ENCODE measurements at regions of chr3 and their contacts with region 1.

Region 1: GRCh38 chr3:141311496-141312353 is 56.6 kb upstream of the ZBTB38 start:
- DNase-seq: peak; percentile 92
- ATAC-seq: peak; percentile 97
- H3K4me3 Mint-ChIP-seq: peak overlapping the region; percentile 100
- H3K27ac Mint-ChIP-seq: peak overlapping the region; percentile 98
- H3K4me1 Mint-ChIP-seq: peaks cover 19% of the 10 kb centered on the region
- H3K27me3 Mint-ChIP-seq: no peaks in the 10 kb centered on the region
- CTCF ChIP-seq: no peak

Region 2: GRCh38 chr3:140941434-140942220 is 370.1 kb before region 1 on chr3 and contains the start of gene SLC25A36:
- CTCF ChIA-PET with region 1: no interaction called
- POLR2A ChIA-PET with region 1: no interaction called
- intact Hi-C with region 1: loop called (anchors 5 kb)
- DNase-seq: peak; percentile 86
- ATAC-seq: peak; percentile 96
- H3K4me3 Mint-ChIP-seq: peak within 1 kb of the TSS; percentile 96
- H3K27ac Mint-ChIP-seq: peak within 1 kb of the TSS; percentile 96
- H3K4me1 Mint-ChIP-seq: peaks cover 37% of the 10 kb centered on the region
- H3K27me3 Mint-ChIP-seq: no peaks in the 10 kb centered on the region
- CTCF ChIP-seq: no peak
- total RNA-seq, gene SLC25A36: 40.4 and 45.7 TPM in 2 replicates

Region 3: GRCh38 chr3:141050576-141051442 is 260.9 kb before region 1 on chr3 and contains the start of gene SPSB4:
- CTCF ChIA-PET with region 1: no interaction called
- POLR2A ChIA-PET with region 1: no interaction called
- intact Hi-C with region 1: no loop called
- DNase-seq: no peak
- ATAC-seq: no peak
- H3K4me3 Mint-ChIP-seq: peak within 1 kb of the TSS; percentile 15
- H3K27ac Mint-ChIP-seq: no peak within 1 kb of the TSS
- H3K4me1 Mint-ChIP-seq: peaks cover 12% of the 10 kb centered on the region
- H3K27me3 Mint-ChIP-seq: peaks cover 58% of the 10 kb centered on the region
- CTCF ChIP-seq: no peak
- total RNA-seq, gene SPSB4: not detected in 2 replicates

Region 4: DNA sequence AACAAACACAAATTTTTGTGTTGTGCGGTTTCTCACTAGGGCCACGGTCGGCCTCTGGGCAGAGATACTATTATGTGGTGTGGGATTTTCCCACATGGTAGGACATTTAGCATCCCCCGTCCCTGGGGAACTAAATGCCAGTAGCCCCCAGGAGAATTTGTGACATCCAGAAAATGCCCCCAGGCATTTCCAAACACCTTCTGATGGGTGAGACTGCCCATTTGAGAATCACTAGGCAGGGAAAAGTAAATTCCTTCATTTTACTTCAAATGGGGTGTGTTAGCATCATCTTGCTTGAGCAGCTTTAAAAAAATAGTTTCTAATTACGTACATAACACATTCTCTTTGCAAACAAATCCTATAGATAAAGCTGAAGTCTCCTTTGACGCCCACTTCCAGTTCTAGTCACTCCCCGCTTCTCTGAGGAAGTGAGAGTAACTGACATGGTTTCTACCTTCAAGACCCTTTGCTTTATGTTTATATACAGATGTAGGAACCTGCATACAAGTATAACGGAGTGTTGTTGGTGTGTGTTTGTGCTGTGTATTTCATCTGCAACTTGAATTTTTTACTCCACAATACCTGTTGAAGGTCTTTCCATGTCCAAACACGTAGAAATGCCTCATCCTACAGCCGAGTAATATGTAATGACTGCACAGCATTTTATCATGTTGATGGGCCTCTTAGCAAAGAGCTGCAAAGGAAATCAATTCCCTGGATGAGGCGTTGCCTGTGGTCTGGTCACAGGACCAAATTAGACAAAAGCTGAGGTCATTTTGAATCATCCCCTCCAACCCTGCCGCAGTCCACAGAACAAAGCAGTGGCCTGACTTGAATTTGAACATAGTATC is 25.2 kb after region 1 on chr3:
- CTCF ChIA-PET with region 1: interaction called, 9 read pairs
- POLR2A ChIA-PET with region 1: interaction called, 19 read pairs
- intact Hi-C with region 1: loop called (anchors 2 kb)
- DNase-seq: no peak
- ATAC-seq: peak; percentile 89
- H3K4me3 Mint-ChIP-seq: peak overlapping the region; percentile 51
- H3K27ac Mint-ChIP-seq: peak overlapping the region; percentile 73
- H3K4me1 Mint-ChIP-seq: peaks cover 26% of the 10 kb centered on the region
- H3K27me3 Mint-ChIP-seq: peaks cover 5% of the 10 kb centered on the region
- CTCF ChIP-seq: no peak

Region 5: DNA sequence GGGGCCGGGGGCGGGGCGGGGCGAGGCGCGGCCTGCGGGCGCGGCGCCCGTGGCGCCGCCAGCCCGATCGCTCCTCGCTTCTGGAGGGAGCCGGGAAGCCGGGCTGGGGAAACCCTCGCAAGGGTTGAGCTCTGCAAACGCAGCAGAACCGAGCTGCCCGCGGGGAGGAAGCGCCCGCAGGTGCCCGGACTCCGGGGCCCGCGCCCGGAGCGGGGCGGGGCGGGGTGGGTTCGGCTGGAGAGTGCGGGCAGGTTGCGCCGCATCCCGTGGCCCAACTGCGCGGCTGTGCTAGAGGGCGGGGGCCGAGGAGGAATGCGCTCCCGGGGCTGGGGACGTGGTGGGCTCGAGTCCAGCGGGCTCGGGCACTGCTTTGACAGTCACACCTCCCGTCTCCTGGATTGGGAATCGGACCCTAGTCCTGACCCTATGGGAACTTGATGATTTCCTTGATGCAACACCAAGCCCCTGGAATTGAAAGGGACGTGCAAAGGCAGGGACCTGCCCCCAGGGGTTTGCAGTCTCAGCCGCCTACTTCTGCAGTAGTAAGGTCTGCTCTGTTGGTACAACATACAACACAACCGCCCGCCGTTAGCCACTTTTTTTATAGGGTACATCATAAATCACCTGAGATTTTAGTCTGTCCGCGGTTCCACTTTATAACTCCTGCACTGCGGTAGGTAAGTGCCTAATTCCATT is 90.9 kb after region 1 on chr3:
- CTCF ChIA-PET with region 1: no interaction called
- POLR2A ChIA-PET with region 1: interaction called, 24 read pairs
- intact Hi-C with region 1: loop called (anchors 1 kb)
- DNase-seq: peak; percentile 63
- ATAC-seq: peak; percentile 67
- H3K4me3 Mint-ChIP-seq: peak overlapping the region; percentile 91
- H3K27ac Mint-ChIP-seq: peak overlapping the region; percentile 89
- H3K4me1 Mint-ChIP-seq: peaks cover 56% of the 10 kb centered on the region
- H3K27me3 Mint-ChIP-seq: no peaks in the 10 kb centered on the region
- CTCF ChIP-seq: no peak

Region 6: DNA sequence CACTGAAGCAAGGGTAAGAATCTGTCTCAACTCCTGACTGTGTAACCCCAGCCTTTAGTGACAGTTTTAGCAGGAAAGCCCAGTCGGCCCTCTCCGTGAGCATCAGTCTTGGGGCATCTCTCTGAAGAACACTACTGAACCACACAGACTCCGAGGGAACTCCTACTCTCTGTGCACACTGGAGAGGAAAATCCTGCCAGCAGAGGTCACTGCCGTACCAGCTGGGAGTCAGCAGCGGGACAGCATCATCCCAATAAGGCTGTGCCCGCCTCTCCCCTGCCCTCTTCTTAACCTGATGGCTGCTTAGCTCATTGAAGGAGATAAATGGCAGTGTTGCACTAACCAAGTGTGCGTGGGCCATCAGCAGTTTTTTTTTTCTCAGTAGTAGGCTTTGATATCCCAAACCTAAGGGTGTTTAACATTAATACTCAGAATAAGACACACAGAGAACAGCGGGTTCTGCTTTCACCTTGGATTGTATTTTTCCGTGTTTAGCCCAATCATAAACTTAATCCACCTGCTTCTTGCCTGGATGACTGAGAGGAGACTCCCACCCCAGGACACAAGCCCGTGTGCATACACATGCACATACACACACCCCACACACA is 148.5 kb after region 1 on chr3:
- CTCF ChIA-PET with region 1: interaction called, 112 read pairs
- POLR2A ChIA-PET with region 1: interaction called, 5 read pairs
- intact Hi-C with region 1: no loop called
- DNase-seq: peak; percentile 67
- ATAC-seq: peak; percentile 99
- H3K4me3 Mint-ChIP-seq: no peak overlapping the region
- H3K27ac Mint-ChIP-seq: no peak overlapping the region
- H3K4me1 Mint-ChIP-seq: peaks cover 11% of the 10 kb centered on the region
- H3K27me3 Mint-ChIP-seq: no peaks in the 10 kb centered on the region
- CTCF ChIP-seq: no peak

Region 7: DNA sequence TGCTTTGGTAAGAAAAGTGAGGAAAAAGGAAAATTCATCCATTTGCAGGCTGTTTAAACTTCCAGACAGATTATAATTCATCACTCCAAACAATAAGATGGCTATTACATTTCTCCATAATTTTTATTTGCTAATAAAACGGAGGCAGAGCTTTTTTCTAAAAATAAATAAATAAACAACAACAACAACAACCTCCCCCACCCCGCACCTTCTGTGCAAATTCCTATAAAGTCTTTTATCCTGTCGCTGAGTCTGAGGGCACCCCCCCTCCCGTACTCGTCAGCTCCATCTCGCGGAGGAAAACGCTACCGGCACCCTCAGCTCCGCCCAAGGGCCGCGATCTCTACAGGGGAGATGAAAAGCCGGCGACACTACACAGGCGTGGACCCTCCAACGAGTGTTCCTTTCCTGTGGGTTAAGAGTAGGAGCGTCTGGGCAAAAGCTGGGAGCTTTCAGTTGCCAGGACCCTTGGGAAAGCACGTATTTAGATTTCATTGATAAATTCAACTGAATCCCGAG is 563.7 kb after region 1 on chr3:
- CTCF ChIA-PET with region 1: no interaction called
- POLR2A ChIA-PET with region 1: interaction called, 4 read pairs
- intact Hi-C with region 1: loop called (anchors 5 kb)
- DNase-seq: peak; percentile 72
- ATAC-seq: peak; percentile 64
- H3K4me3 Mint-ChIP-seq: peak overlapping the region; percentile 93
- H3K27ac Mint-ChIP-seq: peak overlapping the region; percentile 93
- H3K4me1 Mint-ChIP-seq: peaks cover 28% of the 10 kb centered on the region
- H3K27me3 Mint-ChIP-seq: no peaks in the 10 kb centered on the region
- CTCF ChIP-seq: no peak

Region 8: DNA sequence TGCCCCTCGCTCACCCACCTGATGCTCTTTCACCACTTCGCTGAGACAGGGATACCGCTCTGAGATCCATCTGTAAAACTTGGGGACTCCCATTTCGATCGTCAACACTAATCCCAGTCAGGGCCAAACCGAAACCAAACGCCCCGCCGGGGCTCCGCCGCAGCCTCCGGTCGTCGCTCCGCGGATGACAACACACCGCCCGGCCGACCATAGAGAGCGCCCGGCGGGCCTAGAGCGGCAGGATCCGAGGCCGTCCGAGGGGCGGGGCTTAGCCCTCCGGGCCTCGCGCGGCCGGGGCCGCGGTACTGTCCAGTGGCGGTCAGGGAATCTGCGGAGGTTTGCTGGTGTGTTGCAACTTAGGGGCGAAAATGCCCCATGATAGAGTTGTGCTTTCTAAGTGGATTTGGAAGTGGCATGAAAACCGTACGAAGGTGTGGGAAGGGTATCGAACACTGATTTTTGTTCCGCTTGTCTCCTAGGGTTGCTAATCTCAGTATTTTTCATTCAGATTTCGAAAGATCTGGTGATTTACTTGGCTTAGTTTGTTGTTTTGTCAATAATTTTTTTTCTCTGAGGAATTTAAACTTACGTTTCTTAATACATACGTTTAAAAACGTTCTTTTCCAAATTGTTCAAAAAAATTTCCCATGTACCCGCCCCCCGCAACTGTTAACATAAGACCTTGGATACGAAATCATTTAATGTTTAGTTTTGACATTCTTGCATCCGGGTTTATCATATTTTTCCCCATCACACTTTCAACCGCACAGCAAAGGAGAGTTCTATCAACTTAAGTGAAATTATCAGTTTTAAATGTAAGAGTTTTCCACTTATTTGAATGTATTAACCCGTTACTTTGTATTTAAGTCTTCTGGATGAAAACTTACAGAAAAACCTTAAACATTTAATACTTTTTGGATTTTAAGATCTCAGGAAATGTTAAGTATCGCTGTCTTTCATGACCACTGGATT is 1136.4 kb after region 1 on chr3 and contains the start of gene XRN1:
- CTCF ChIA-PET with region 1: no interaction called
- POLR2A ChIA-PET with region 1: interaction called, 3 read pairs
- intact Hi-C with region 1: loop called (anchors 5 kb)
- DNase-seq: peak; percentile 96
- ATAC-seq: peak; percentile 97
- H3K4me3 Mint-ChIP-seq: peak within 1 kb of the TSS; percentile 97
- H3K27ac Mint-ChIP-seq: peak within 1 kb of the TSS; percentile 98
- H3K4me1 Mint-ChIP-seq: peaks cover 44% of the 10 kb centered on the region
- H3K27me3 Mint-ChIP-seq: no peaks in the 10 kb centered on the region
- CTCF ChIP-seq: no peak
- total RNA-seq, gene XRN1: 55.0 and 63.0 TPM in 2 replicates

Measured in activated B cell treated with CpG ODN at 0.5 μM for 24 hours (primary cell).